Activated T-helper 2 cell treated with anti-CD3 and anti-CD28 coated beads, Interferon-gamma antibody, Interleukin-2, Interleukin-4, amounts not matched to agents 10 μg/mL and 5 μg/mL and 100 μg/mL, durations not matched to agents 14 hours and 24 hours and 36 hours (primary cell): ENCODE measurements at regions of chr1 and their contacts with region 1.

Region 1: DNA sequence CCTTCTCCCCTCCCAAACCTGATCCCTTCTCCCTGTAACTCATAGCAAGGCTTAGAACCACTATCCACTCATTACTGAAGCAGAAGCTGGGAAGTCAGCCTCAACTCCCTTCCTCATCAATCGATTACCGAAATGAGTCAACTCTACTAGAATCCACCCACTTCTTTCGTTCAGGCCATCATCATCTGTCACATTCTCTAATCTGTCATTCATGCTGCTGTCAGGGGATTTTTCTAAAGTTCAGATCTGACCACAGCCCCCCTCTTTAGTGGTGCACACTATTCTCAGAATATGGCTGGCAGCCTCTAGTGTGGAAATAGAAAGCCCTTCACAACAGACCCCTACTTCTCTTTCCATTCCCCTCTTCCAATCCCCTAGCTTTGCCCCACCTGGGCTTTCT is 5.1 kb downstream of the NT5C1A start:
- DNase-seq: peak; percentile 28
- H3K4me3 Mint-ChIP-seq: no peak overlapping the region
- H3K27ac Mint-ChIP-seq: peak overlapping the region; percentile 65
- H3K4me1 Mint-ChIP-seq: peaks cover 25% of the 10 kb centered on the region
- H3K27me3 Mint-ChIP-seq: peaks cover 15% of the 10 kb centered on the region

Region 2: DNA sequence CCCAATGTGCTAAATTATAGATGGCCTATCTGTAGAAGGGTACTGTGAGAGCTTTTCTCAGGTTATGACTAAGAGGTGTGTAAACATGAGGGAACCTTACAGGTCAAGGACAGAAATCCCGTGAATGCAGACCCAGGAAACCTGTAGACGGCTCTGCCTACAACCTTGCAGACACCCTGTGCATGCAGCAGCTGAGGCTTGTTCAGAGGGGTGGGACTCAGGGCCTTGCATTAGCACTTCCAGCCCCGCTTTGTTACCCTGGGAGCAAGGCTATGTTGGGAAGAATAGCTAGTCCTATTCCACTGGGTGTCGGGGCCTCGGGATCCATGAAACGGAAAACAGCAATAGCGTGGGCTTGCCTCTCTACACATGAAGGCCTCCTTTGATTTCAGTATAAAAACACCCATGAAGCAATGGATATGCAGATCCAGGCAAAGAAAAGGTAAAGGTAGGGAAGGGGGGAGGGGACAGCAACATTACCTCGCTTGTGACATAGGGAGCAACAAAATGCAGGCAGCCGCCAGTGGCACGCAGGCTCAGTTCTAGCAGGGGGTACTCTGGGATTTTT is 650.1 kb before region 1 on chr1:
- intact Hi-C with region 1: no loop called
- DNase-seq: no peak
- H3K4me3 Mint-ChIP-seq: no peak overlapping the region
- H3K27ac Mint-ChIP-seq: no peak overlapping the region
- H3K4me1 Mint-ChIP-seq: no peaks in the 10 kb centered on the region
- H3K27me3 Mint-ChIP-seq: no peaks in the 10 kb centered on the region

Region 3: GRCh38 chr1:39631361-39632322 is 35.1 kb before region 1 on chr1:
- intact Hi-C with region 1: loop called (anchors 2 kb)
- DNase-seq: no peak
- H3K4me3 Mint-ChIP-seq: no peak overlapping the region
- H3K27ac Mint-ChIP-seq: peak overlapping the region; percentile 82
- H3K4me1 Mint-ChIP-seq: peaks cover 28% of the 10 kb centered on the region
- H3K27me3 Mint-ChIP-seq: peaks cover 13% of the 10 kb centered on the region

Region 4: GRCh38 chr1:39646232-39647081 is 20.3 kb before region 1 on chr1:
- intact Hi-C with region 1: no loop called
- DNase-seq: no peak
- H3K4me3 Mint-ChIP-seq: no peak overlapping the region
- H3K27ac Mint-ChIP-seq: no peak overlapping the region
- H3K4me1 Mint-ChIP-seq: peaks cover 2% of the 10 kb centered on the region
- H3K27me3 Mint-ChIP-seq: peaks cover 4% of the 10 kb centered on the region

Region 5: DNA sequence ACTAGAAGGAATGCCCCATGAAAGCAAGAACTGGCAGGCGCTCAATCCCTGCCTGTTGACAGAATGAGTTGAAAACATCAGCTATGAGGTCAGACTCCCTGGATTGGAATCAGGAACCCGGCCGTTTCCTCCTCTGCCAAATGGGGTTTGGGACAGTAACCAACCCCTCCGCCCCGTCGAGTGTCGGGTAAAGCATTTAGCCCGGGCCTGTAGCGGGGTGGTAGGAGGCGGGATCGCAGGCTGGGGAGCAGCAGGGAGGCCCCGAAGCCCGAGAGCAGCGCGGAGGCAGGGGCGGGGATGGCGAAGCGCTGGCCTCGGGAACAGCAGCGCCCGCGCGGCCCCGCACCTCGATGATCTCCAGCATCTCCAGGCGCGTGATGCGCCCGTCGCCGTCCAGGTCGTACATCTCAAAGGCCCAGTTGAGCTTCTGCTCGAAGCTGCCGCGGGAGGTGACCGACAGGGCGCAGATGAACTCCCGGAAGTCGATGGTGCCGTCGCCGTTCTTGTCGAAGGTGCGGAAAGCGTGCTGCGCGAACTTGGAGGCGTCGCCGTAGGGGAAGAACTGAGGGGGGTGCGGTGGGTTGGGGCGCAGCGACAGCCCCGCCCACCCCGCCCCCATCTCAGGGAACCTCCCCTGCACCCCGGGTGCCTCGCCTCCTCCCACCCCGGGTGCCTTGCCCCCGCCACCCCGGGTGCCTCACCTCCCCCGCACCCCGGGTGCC is 17.0 kb after region 1 on chr1:
- intact Hi-C with region 1: no loop called
- DNase-seq: no peak
- H3K4me3 Mint-ChIP-seq: no peak overlapping the region
- H3K27ac Mint-ChIP-seq: no peak overlapping the region
- H3K4me1 Mint-ChIP-seq: peaks cover 6% of the 10 kb centered on the region
- H3K27me3 Mint-ChIP-seq: peaks cover 58% of the 10 kb centered on the region